ENCODE measurements at regions of chr6 and their contacts with region 1.

Region 1: DNA sequence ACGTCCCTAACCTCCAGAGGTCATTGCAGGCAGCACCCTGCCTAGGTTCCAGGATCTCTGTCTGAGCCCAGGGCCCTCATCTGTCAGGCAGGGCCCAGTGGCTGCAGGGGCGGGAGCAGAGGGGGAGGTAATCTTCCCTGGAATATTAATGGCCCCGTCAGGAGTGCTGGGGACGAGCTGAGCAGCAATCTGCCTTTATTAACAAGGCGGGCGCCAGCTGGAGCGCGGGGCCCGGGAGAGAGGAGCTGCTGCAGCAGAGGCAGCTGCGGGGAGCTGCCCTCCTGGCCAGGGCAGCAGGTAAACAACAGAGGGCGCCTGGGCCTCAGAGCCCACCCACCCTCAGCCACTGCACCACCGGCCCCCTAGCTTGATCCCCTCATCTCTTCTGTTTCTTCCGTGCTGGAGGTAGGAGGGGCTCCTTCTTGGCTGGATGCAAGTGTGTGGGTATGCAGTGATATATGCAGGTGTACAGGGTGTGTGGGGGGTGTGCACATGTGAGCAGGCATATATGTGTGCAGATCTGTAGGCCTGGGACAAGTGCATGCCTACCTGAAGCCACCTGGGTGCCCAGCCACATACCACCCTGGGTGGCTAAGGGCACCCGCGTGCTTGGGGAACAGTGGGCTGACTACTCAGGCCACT is 131.8 kb upstream of the MLN start:
- DNase-seq: peak; percentile 79

Region 2: DNA sequence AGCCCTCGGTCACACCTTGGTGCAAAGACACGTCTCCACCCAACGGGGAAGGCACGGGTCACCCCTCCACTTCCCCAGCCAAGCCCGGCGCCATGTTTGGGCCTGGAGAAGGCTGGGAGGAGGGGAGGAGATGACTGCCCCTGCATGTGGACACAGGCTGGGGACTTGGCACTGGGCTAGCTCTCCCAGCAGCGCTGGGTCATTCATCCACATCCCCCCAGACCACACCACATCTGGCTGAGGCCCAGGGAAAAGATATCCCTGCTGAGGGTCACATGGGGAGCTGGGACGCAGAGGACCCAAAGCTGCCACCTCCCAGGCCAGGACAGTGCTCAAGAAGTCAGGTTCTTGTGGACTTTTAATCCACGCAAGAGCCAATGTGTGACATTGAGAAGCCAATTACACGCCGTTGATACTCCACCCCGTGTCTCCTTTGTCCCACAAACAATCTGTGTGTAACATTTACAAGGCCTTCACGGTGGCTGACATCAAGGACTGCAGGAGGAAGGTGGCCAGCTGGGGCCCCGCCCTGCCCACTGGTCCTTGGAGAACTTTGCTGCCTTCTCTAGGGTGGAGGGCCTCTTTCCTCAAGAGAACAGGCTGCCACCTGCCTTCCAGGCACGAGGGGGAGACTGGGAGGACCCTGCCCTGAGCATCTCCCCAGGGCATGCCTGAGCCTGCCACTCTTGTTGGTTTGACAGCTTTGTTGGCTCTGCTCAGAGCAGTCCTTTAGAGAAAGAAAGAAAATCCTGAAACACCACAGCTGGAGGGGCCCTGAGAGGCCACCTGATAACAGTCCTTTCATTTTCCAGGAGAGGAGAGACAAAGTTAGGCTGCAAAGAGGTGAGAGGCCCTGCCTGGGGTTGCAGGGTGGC is 183.6 kb before region 1 on chr6:
- intact Hi-C with region 1: no loop called
- DNase-seq: no peak

Region 3: DNA sequence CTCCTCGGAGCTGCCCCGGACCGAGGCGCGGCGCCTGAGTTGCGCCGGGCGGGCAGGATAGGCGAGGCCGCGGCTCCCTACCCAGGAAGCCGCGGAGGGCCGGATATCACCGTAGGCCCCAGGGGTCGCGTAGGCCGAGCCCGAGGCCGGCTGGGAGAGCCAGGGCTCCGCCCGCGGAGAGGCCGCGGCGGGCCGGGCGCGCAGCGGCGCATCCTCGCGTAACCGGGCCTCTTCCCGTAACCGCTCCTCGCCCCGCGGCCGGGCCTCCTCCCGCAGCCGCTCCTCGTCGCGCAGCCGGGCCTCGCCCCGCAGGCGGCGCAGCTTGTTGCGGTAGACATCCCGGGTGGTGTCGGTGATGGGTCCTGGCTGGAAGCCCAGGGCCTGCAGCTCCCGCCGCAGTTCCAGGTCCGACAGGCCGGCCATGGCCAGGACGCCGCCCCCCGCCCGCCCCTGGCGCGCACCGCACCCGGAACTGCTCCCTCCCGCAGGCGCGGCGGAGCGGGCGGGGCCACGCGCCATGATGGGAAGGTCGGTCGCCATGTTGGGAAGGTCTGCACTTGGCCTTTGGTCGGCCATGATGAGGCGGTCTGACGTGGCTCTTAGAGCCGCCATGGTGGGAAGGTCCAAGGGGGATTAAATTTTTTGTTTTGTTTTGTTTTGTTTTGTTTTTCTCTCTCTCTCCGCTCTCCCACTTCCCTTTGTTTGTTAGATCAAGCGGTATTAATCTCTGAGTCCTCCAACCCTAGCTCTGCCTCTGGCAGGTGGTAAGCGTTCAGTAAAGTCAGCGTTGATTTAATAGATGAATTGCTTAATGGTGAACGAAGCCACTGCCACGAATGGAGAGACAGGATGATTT is 146.6 kb before region 1 on chr6 and contains the start of gene LEMD2:
- intact Hi-C with region 1: no loop called
- DNase-seq: peak; percentile 98
- total RNA-seq, gene LEMD2: 38.0 to 41.4 TPM

Region 4: DNA sequence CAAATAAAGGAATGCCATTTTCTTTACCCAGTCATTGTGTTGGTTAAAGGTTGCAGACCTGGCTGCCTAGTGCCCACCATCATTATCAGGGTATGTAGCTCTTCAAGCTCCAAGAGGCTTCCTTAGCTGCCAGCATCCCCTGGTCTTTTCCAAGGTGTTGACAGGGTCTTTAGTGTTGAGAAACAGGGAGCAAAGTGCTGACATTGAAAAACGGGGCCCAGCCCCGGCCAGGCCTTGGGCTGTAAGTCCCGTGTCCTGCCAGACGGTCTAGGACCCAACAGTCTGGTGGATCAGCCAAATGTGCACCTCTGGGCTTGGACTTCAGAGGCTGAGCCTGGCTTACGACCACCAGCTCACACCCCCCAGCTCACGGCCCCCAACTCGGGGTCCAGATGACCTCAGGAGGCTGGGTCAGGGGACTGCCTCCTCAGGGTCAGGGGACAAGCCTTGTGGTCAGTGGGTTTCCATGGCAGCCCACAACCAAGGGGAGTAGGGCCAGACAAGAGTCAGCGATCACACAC is 17.3 kb before region 1 on chr6:
- intact Hi-C with region 1: loop called in 1 of 2 experiments (anchors 1 kb)
- DNase-seq: no peak

Region 5: GRCh38 chr6:34447910-34448309 is 512.4 kb after region 1 on chr6:
- intact Hi-C with region 1: no loop called
- DNase-seq: no peak